Ascending aorta (tissue), 2 donors: ENCODE measurements at regions of chr22 and their contacts with region 1.

Region 1: DNA sequence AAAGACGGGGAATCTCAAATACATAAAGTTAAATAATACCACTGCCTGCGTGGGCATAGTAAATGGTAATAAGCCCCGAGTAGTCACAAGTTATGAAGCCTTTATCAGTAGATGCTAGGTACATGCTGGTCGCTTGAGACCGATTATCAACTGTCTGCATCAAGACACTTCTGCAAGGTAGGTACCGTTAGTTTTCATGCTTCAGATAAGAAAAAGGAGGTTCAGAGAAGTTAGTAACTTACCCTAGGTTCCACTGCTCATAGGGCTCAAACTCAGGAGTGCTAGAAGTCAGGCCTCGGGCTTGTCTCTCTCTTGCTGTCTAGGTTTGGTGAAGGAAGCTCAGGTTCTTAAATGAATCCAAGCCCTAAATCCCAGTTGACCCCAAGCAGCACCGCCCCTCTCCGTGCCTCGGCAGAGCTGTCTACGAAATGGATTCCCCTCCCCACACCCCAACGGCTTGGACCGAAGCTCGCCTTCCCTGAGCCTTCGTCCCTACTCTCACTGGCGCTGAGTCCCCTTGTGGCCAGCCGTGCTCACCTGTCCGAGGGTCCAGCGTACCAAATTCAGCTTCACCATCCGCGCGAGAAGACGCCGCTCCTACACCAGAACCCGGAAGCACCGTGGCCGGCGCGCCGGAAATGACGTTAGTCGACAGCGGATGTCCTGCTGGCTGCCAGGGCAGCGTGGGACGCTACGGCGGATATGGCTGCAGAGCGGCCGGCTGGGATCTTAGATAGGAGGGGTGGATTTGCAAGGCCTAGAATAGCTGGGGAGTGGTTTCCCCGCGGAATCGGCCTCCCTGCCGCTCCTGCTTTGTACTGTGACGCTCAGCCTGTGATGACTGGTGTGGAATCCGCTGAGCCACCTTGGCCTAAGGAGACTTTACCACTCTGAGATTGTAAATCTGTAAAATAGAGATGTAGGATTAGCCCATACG is at the start of gene TFIP11:
- DNase-seq: peak; percentile 75 to 97
- H3K4me3 ChIP-seq: peak within 1 kb of the TSS; percentile 73 to 88
- H3K27ac ChIP-seq: peak within 1 kb of the TSS; percentile 55 to 86
- H3K4me1 ChIP-seq: peaks cover 5 to 11% of the 10 kb centered on the region in 2 donors
- H3K27me3 ChIP-seq: no peaks in the 10 kb centered on the region
- CTCF ChIP-seq: peak in 2 of 3 experiments; percentile 4
- total RNA-seq, gene TFIP11: 11.6 TPM

Region 2: GRCh38 chr22:26215736-26216135 is 296.4 kb before region 1 on chr22:
- intact Hi-C with region 1: no loop called
- DNase-seq: no peak
- H3K4me3 ChIP-seq: no peak overlapping the region
- H3K27ac ChIP-seq: no peak overlapping the region
- H3K4me1 ChIP-seq: no peaks in the 10 kb centered on the region
- H3K27me3 ChIP-seq: no peaks in the 10 kb centered on the region
- CTCF ChIP-seq: no peak

Region 3: DNA sequence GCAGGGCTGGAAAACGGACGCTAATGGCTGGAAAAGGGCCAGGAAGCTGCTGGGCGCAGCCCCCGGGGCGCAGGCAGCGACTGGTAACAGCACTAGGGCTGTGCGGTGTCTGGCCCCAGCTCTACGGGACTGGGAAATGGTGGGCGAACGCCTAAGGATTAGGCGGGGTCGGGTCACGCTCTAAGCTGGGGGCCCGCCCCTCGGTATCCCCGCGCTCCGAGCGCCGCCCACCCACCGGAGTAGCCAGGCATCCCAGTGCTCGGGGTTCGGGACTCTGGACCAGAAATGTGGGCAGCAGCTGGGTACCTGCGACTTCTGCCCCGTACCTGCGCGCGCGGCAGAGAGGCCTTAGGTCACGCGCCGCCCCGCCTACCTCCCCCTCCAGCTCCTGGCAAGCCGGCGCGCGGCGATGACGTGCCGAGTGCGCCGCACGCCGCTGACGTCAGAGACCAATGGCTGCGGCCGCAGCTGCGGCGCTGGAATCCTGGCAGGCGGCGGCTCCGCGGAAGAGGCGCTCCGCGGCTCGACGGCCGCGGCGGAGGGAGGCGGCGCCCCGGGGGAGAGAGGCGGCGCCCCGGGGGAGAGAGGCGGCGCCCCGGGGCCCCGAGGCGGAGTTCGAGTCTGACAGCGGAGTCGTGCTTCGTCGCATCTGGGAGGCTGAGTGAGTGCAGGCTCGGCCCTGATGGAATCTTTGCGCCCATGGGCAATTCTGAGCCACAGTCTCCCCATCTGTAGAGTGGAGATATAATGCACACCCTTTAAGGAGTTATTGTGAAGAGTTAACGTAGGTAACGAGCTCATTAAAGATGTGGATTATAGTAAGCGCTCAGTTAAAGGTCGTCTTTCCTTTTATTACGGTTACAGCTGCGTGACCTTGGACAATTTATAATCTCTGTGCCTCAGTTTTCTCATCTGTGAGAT is 28.4 kb before region 1 on chr22 and contains the starts of genes HPS4 and SRRD:
- intact Hi-C with region 1: loop called (anchors 1 kb)
- DNase-seq: peak; percentile 45 to 94
- H3K4me3 ChIP-seq: peak within 1 kb of the TSS; percentile 90 to 99
- H3K27ac ChIP-seq: peak within 1 kb of the TSS; percentile 95 to 96
- H3K4me1 ChIP-seq: peaks cover 6 to 16% of the 10 kb centered on the region in 2 donors
- H3K27me3 ChIP-seq: no peaks in the 10 kb centered on the region
- CTCF ChIP-seq: no peak
- total RNA-seq, gene HPS4: 39.3 TPM
- total RNA-seq, gene SRRD: 85.6 TPM